ENCODE measurements at regions of chr6 and their contacts with region 1.

Region 1: DNA sequence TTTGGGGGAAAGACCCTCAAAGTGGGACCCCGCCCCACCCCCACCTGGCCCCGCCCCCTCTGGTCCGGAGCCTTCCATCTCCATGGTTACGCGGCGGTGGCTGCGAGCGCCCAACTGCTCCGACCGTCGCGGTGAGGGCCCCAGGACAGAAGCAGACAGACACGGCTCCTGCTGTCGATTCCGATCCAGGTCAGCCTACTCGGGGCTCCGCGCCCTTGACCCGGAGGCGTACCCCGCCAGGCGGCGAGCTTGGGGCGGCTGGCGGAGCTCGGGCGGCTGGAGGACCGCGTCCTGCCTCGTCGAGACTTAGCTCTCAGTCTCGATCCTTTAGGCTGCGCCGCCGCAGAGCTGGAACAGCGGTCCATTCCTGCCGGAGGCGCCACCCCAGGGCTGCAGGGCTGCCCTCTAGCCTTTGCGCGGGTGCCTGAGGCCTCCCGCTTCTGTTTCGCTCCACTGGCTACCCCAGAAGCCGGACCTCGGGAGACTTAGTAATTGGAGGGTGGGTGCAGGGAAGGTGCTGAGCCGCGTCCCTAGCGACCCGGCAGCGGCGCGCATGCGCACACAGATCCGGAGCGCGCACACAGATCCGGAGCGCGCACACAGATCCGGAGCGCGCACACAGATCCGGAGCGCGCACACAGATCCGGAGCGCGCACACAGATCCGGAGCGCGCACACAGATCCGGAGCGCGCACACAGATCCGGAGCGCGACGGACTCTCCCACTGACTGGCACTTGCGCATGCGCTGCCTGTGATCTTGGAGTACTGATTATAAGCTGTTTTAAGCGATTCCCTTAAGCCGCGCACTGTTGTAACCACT is at the start of gene CFAP206:
- DNase-seq: peak; percentile 88 to 94 (median 91)
- ATAC-seq: peak; percentile 97
- H3K4me3 ChIP-seq: peak within 1 kb of the TSS; percentile 80
- H3K27ac ChIP-seq: peak within 1 kb of the TSS; percentile 81
- H3K4me1 ChIP-seq: no peaks in the 10 kb centered on the region
- H3K27me3 ChIP-seq: no peaks in the 10 kb centered on the region
- total RNA-seq, gene CFAP206: 0.31 to 0.60 (median 0.50) TPM in 3 of 4 donors, not detected in the other

Region 2: GRCh38 chr6:87472525-87473418 is 64.7 kb after region 1 on chr6 and contains the start of gene SLC35A1:
- intact Hi-C with region 1: loop called in 1 of 4 experiments (anchors 5 kb)
- DNase-seq: peak; percentile 88 to 95 (median 95)
- ATAC-seq: peak; percentile 99
- H3K4me3 ChIP-seq: peak within 1 kb of the TSS; percentile 83
- H3K27ac ChIP-seq: peak within 1 kb of the TSS; percentile 99
- H3K4me1 ChIP-seq: no peaks in the 10 kb centered on the region
- H3K27me3 ChIP-seq: no peaks in the 10 kb centered on the region
- total RNA-seq, gene SLC35A1: 13.1 to 17.6 (median 15.1) TPM

Region 3: DNA sequence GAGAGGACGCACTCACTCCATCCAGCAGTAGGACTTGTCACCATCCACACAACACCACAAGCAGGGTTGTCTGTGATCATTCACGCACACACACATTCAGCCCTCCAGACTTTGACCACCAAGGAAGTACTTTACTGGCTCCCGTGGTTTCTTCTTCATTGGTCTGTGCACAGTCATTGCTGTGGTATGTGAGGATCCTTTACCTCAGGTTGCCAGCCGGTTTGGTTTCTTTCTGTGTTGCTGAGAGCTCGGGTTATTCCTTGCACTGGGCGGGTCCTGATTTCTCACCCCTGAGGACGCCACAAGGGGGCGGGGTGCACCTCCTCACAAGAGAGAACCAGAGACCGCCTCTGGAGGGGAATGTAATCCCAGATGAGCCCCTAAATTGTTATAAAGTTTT is 75.8 kb after region 1 on chr6:
- intact Hi-C with region 1: no loop called
- DNase-seq: peak in 2 of 3 donors; percentile 52
- ATAC-seq: no peak
- H3K4me3 ChIP-seq: no peak overlapping the region
- H3K27ac ChIP-seq: no peak overlapping the region
- H3K4me1 ChIP-seq: no peaks in the 10 kb centered on the region
- H3K27me3 ChIP-seq: no peaks in the 10 kb centered on the region

Region 4: GRCh38 chr6:87645080-87645479 is 237.0 kb after region 1 on chr6:
- intact Hi-C with region 1: no loop called
- DNase-seq: no peak
- ATAC-seq: no peak
- H3K4me3 ChIP-seq: no peak overlapping the region
- H3K27ac ChIP-seq: no peak overlapping the region
- H3K4me1 ChIP-seq: no peaks in the 10 kb centered on the region
- H3K27me3 ChIP-seq: no peaks in the 10 kb centered on the region